Common myeloid progenitor, CD34-positive (primary cell): ENCODE measurements at regions of chr17 and their contacts with region 1.

Region 1: DNA sequence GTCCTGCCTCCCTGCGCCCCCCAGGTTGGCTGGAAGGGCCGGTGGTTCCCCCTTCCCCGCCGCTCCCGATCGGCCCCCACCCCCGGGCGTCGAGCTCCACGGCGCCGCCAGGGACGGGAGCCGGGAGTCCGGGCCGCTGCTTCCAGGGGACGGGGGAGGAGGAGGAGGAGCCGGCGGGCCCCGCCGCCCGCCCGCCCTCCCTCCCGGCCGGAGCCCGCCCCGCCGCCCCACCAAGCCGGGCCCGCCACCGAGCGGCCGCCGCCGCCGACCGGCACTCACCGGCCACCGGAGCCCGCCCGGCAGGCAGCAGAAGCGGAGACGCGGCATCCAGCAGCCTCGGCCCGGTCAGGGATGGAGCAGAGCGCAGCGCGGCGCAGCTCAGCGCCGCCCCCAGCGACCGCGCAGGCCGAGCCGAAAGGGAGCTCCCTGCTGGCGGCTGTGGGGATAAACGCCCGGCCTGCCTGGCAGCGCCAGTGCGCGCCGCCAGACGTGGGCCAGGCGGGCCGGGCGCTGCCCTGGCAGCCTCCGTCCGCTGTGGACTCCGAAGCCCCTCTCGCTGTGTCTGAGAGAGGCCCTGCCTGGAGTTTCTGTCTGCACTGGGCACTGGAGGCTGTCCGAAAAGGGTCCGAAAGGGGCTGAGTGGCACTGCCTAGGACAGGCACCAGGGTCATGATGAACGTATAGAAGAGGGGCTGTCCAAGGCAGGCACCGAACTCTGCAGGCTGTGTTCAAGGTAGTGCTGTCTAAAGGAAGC is at the start of gene MYO18A:
- DNase-seq: peak; percentile 70 to 77 (median 76)
- H3K4me3 ChIP-seq: peak within 1 kb of the TSS; percentile 11 to 69 (median 57)
- H3K27ac ChIP-seq: no peak within 1 kb of the TSS
- H3K4me1 ChIP-seq: peaks cover 2 to 55% (median 37%) of the 10 kb centered on the region in 4 experiments
- H3K27me3 ChIP-seq: no peaks in the 10 kb centered on the region

Region 2: GRCh38 chr17:29162738-29163341 is 17.4 kb before region 1 on chr17:
- CTCF ChIA-PET with region 1: interaction called, 10 read pairs
- POLR2A ChIA-PET with region 1: no interaction called
- DNase-seq: no peak
- H3K4me3 ChIP-seq: no peak overlapping the region
- H3K27ac ChIP-seq: no peak overlapping the region
- H3K4me1 ChIP-seq: peaks cover 0 to 16% (median 4%) of the 10 kb centered on the region in 4 experiments
- H3K27me3 ChIP-seq: no peaks in the 10 kb centered on the region

Region 3: GRCh38 chr17:29195465-29196081 is 15.4 kb after region 1 on chr17:
- CTCF ChIA-PET with region 1: interaction called, 24 read pairs
- POLR2A ChIA-PET with region 1: interaction called, 4 read pairs
- DNase-seq: peak; percentile 71 to 94 (median 92)
- H3K4me3 ChIP-seq: peak overlapping the region in 4 of 7 experiments; percentile 13 to 52 (median 45)
- H3K27ac ChIP-seq: no peak overlapping the region
- H3K4me1 ChIP-seq: peaks cover 0 to 32% (median 16%) of the 10 kb centered on the region in 4 experiments
- H3K27me3 ChIP-seq: no peaks in the 10 kb centered on the region

Region 4: DNA sequence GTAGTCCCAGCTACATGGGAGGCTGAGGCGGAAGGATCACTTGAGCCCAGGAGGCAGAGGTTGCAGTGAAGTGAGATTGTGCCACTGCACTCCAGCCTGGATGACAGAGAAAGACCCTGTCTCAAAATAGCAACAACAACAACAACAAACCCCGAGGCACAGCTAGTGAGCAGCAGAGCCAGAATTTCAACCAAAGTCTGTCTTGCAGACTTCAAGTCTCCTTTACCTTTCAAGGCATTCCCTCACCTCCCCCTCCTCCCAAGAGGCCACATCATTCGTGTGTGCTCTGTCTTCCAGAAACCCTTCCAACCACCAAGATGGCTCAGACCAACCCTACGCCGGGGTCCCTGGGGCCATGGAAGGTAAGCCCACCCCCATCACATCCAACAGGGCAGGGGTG is 68.6 kb after region 1 on chr17:
- CTCF ChIA-PET with region 1: no interaction called
- POLR2A ChIA-PET with region 1: no interaction called
- DNase-seq: no peak
- H3K4me3 ChIP-seq: no peak overlapping the region
- H3K27ac ChIP-seq: no peak overlapping the region
- H3K4me1 ChIP-seq: no peaks in the 10 kb centered on the region
- H3K27me3 ChIP-seq: no peaks in the 10 kb centered on the region

Region 5: GRCh38 chr17:29357821-29358232 is 177.6 kb after region 1 on chr17:
- CTCF ChIA-PET with region 1: no interaction called
- POLR2A ChIA-PET with region 1: no interaction called
- DNase-seq: peak in 2 of 3 donors; percentile 52 to 63
- H3K4me3 ChIP-seq: no peak overlapping the region
- H3K27ac ChIP-seq: no peak overlapping the region
- H3K4me1 ChIP-seq: peaks cover 0 to 14% (median 4%) of the 10 kb centered on the region in 4 experiments
- H3K27me3 ChIP-seq: no peaks in the 10 kb centered on the region